ENCODE measurements at regions of chr4 and their contacts with region 1.

Region 1: GRCh38 chr4:87559109-87559837 is 30.1 kb upstream of the SPARCL1 start:
- DNase-seq: peak in 1 of 5 donors; percentile 12
- ATAC-seq: peak in 3 of 4 donors; percentile 63 to 80 (median 65)
- H3K4me3 ChIP-seq: no peak overlapping the region
- H3K27ac ChIP-seq: no peak overlapping the region
- H3K4me1 ChIP-seq: peaks cover 0 to 10% (median 2%) of the 10 kb centered on the region in 12 donors
- H3K27me3 ChIP-seq: no peaks in the 10 kb centered on the region
- CTCF ChIP-seq: no peak
- POLR2A ChIP-seq: no peak

Region 2: GRCh38 chr4:87608229-87608628 is 49.0 kb after region 1 on chr4 and contains the start of gene DSPP:
- intact Hi-C with region 1: no loop called
- DNase-seq: no peak
- ATAC-seq: no peak
- H3K4me3 ChIP-seq: no peak within 1 kb of the TSS
- H3K27ac ChIP-seq: no peak within 1 kb of the TSS
- H3K4me1 ChIP-seq: no peaks in the 10 kb centered on the region
- H3K27me3 ChIP-seq: peaks cover 0 to 5% (median 0%) of the 10 kb centered on the region in 9 donors
- CTCF ChIP-seq: no peak
- POLR2A ChIP-seq: no peak
- total RNA-seq, gene DSPP: not detected

Region 3: DNA sequence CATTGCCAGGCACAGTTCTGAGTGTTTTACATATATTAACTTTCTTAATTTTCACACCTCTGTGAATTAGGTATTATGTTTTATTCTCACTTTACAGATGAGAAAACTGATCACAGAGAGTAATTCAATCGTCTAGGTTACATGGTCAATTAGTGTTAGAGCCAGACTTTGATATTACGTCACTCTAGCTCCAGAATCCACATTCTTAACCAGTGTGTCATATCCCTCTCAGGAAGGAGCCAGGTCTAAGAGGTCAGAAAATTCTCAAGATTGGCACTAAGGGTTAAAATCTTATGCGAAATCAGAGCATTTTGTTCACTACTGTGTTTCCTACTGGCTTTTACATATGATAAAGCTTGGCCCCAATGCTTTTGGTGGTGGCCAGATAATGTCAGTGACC is 98.3 kb after region 1 on chr4:
- intact Hi-C with region 1: loop called in 2 of 10 experiments (anchors 10 kb)
- DNase-seq: no peak
- ATAC-seq: no peak
- H3K4me3 ChIP-seq: no peak overlapping the region
- H3K27ac ChIP-seq: no peak overlapping the region
- H3K4me1 ChIP-seq: peaks cover 0 to 5% (median 0%) of the 10 kb centered on the region in 12 donors
- H3K27me3 ChIP-seq: no peaks in the 10 kb centered on the region
- CTCF ChIP-seq: no peak
- POLR2A ChIP-seq: no peak

Region 4: GRCh38 chr4:87669373-87669772 is 110.1 kb after region 1 on chr4:
- intact Hi-C with region 1: loop called in 1 of 10 experiments (anchors 10 kb)
- DNase-seq: no peak
- ATAC-seq: no peak
- H3K4me3 ChIP-seq: no peak overlapping the region
- H3K27ac ChIP-seq: peak overlapping the region in 1 of 12 donors; percentile 7
- H3K4me1 ChIP-seq: peaks cover 0 to 6% (median 0%) of the 10 kb centered on the region in 12 donors
- H3K27me3 ChIP-seq: no peaks in the 10 kb centered on the region
- CTCF ChIP-seq: no peak
- POLR2A ChIP-seq: no peak

Measured in heart left ventricle (tissue), 16 donors.